ENCODE measurements at regions of chr7 and their contacts with region 1.

Region 1: DNA sequence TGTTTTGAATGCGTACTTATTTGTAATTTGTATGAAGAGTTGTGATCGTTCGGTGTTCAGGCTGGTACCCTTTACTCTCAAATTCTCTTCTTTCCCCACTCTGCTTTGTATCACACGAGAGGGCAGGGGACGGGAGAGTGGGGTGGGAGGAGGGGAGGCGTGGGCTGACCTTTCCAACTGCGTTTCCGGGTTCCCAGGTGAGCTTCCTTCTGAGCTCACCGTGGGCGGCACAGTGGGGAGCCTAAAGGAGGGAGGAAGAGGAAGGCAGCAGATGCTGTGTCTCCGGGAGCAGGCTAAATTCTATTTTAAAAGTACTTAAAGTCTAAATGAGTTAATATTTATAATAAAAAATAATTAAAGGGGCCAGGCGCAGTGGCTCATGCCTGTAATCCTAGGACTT is 7.4 kb upstream of the XRCC2 start:
- DNase-seq: no peak
- H3K4me3 ChIP-seq: no peak overlapping the region
- H3K27me3 ChIP-seq: no peaks in the 10 kb centered on the region
- CTCF ChIP-seq: no peak

Region 2: GRCh38 chr7:152292898-152293297 is 390.4 kb before region 1 on chr7:
- CTCF ChIA-PET with region 1: no interaction called
- POLR2A ChIA-PET with region 1: interaction called, 12 read pairs
- DNase-seq: no peak
- H3K4me3 ChIP-seq: no peak overlapping the region
- H3K27me3 ChIP-seq: no peaks in the 10 kb centered on the region
- CTCF ChIP-seq: no peak

Region 3: DNA sequence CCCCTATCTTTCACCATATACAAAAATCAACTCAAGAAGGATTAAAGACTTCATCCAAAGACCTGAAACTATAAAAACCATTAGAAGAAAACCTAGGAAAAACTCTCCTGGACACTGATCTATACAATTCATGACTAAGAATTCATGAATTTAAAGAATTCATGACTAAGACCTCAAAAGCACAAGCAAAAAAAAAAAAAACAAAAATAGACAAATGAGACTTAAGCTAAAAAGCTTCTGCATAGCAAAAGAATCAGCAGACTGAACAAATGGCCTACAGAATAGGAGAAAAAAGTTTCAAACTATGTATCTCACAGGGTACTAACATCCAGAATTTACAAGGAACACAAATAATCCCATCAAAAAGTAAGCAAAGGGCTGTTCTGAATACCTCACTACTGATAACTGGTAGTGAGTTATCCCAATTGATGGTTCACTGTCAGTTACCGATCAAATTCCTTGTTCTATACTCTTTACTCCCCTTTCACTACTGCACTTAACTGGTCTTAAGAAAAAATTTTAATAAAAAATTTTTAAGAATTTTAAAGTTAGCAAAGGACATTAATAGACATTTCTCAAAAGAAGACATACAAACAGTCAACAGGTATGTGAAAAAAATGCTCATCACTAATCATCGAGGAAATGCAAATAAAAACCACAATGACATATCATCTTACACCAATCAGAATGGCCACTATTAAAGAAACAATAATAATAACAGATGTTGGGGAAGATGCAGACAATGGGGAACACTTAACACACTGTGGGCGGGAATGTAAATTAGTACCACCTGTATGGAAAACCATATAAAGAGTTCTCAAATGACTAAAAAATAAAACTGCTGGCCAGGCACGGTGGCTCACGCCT is 280.7 kb before region 1 on chr7:
- CTCF ChIA-PET with region 1: no interaction called
- POLR2A ChIA-PET with region 1: interaction called, 14 read pairs
- DNase-seq: no peak
- H3K4me3 ChIP-seq: no peak overlapping the region
- H3K27me3 ChIP-seq: no peaks in the 10 kb centered on the region
- CTCF ChIP-seq: no peak

Measured in BJ (cell line).